Panc1 (cell line): ENCODE measurements at regions of chr1 and their contacts with region 1.

Region 1: GRCh38 chr1:45266151-45266801 is 59.9 kb upstream of the ZSWIM5 start:
- DNase-seq: no peak
- ATAC-seq: peak; percentile 93
- H3K4me3 ChIP-seq: peak overlapping the region in 1 of 2 experiments; percentile 7; a peak in 1 of 4 replicates
- H3K27ac ChIP-seq: peak overlapping the region; percentile 73
- H3K4me1 ChIP-seq: peaks cover 16% of the 10 kb centered on the region
- H3K27me3 ChIP-seq: no peaks in the 10 kb centered on the region
- CTCF ChIP-seq: no peak

Region 2: DNA sequence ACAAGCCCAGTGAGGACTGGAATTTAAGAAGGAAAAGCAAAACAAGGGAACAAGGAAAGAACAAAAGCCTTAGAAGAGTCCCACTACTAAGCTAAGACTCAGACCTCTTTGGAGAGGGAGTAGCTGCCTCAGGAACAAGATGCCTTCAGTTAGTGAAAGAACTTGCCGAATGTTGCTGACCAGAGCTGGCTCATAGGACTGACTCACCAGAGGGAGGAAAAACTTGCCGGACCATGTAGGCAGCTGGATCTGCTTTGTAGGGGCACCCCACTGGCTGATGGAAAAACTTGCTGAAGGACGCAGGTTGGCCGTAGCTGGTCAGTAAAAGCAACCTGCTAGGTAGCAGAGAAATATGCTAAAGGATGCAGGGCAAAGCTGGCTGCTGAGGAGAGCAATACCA is 44.6 kb before region 1 on chr1:
- CTCF ChIA-PET with region 1: no interaction called
- POLR2A ChIA-PET with region 1: no interaction called
- in situ Hi-C with region 1: no loop called
- intact Hi-C with region 1: no loop called
- DNase-seq: no peak
- ATAC-seq: no peak
- H3K4me3 ChIP-seq: no peak overlapping the region
- H3K27ac ChIP-seq: no peak overlapping the region
- H3K4me1 ChIP-seq: no peaks in the 10 kb centered on the region
- H3K27me3 ChIP-seq: peaks cover 5% of the 10 kb centered on the region; the same call in 1 of the 2 replicates
- CTCF ChIP-seq: no peak

Region 3: DNA sequence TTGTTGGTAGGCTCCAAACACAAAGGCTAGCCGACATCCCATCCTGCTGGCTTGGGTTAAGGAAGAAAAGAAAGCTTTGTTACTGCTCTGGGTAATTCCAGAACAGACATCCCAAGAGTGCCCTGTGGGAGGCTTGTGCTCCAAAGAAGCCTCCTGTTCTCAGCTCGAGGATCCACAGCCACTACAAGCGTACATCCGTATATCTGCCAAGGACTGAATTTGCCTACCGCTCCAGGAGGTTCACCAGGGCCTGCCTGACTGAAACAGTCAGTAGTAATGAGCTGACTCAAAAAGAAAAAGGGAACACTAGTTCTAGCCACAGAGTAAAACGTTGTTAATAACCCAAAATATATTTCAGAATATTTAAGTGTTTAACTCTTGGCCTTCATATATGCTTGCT is 98.8 kb after region 1 on chr1:
- CTCF ChIA-PET with region 1: no interaction called
- POLR2A ChIA-PET with region 1: interaction called, 11 read pairs
- in situ Hi-C with region 1: no loop called
- intact Hi-C with region 1: no loop called
- DNase-seq: no peak
- ATAC-seq: no peak
- H3K4me3 ChIP-seq: no peak overlapping the region
- H3K27ac ChIP-seq: no peak overlapping the region
- H3K4me1 ChIP-seq: no peaks in the 10 kb centered on the region; the same call in 1 of the 2 replicates
- H3K27me3 ChIP-seq: no peaks in the 10 kb centered on the region
- CTCF ChIP-seq: no peak